Cardiac septum (tissue), 1 donor: ENCODE measurements at regions of chr1 and their contacts with region 1.

Region 1: DNA sequence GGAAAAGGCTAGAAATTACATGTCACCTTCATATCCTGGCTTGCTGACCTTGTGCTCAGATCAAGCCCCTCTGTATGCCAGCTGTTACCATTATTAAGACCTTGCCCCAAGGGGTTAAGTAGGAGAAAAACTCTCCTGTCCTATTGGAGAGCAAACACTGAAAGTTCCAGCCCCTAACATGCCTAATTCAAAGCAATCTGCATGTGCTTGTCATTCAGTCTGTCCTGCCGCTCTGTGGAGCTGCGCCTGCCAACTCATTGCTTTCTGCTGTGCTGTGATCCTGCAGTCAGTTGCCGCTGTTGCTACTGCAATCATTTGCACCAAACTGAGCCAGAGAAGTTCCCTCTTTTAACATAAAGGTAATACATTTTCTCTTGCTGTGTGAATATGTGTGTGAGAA is 113.4 kb downstream of the DISP1 start:
- DNase-seq: peak; percentile 83

Region 2: GRCh38 chr1:222680080-222680479 is 248.1 kb before region 1 on chr1:
- intact Hi-C with region 1: no loop called
- DNase-seq: no peak

Region 3: GRCh38 chr1:222814536-222815439 is 113.4 kb before region 1 on chr1 and contains the start of gene DISP1:
- intact Hi-C with region 1: loop called (anchors 10 kb)
- DNase-seq: peak; percentile 85
- total RNA-seq, gene DISP1: 3.0 TPM

Region 4: GRCh38 chr1:223022641-223023473 is 94.6 kb after region 1 on chr1:
- intact Hi-C with region 1: loop called (anchors 5 kb)
- DNase-seq: no peak

Region 5: GRCh38 chr1:223074445-223075300 is 146.5 kb after region 1 on chr1:
- intact Hi-C with region 1: loop called (anchors 5 kb)
- DNase-seq: no peak